Mammary epithelial cell (primary cell): ENCODE measurements at regions of chr1 and their contacts with region 1.

Region 1: DNA sequence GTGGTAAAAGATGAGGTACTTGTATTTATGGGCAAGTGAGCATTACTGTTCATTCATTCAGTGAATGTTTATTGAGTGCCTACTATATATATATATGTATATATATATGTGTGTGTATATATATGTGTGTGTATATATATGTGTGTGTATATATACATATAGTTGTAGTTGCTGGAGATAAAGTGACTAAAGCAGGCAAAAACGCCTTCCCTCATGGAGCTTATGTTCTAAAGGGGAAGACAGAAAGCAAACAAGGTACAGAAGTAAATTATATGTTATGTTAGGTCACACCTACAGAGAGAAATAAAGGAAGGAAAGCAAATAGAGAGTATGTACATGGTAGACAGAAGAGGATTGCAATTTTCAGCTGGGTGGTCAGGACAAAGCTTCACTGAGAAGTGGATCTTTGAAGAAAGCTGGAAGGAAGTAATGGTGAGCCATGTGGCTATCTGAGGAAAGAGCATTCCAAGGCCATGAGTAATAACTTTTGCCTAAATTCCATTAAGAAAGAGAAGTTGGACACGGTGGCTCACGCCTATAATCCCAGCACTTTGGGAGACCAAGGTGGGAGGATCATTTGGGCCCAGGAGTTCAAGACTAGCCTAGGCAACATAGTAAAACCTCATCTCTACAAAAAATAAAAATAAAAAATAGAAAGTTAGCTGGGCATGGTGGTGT is 33.5 kb upstream of the KLF17 start:
- DNase-seq: peak; percentile 44
- H3K4me3 ChIP-seq: no peak overlapping the region
- H3K27ac ChIP-seq: no peak overlapping the region
- H3K4me1 ChIP-seq: peaks cover 9% of the 10 kb centered on the region
- H3K27me3 ChIP-seq: no peaks in the 10 kb centered on the region
- CTCF ChIP-seq: no peak

Region 2: DNA sequence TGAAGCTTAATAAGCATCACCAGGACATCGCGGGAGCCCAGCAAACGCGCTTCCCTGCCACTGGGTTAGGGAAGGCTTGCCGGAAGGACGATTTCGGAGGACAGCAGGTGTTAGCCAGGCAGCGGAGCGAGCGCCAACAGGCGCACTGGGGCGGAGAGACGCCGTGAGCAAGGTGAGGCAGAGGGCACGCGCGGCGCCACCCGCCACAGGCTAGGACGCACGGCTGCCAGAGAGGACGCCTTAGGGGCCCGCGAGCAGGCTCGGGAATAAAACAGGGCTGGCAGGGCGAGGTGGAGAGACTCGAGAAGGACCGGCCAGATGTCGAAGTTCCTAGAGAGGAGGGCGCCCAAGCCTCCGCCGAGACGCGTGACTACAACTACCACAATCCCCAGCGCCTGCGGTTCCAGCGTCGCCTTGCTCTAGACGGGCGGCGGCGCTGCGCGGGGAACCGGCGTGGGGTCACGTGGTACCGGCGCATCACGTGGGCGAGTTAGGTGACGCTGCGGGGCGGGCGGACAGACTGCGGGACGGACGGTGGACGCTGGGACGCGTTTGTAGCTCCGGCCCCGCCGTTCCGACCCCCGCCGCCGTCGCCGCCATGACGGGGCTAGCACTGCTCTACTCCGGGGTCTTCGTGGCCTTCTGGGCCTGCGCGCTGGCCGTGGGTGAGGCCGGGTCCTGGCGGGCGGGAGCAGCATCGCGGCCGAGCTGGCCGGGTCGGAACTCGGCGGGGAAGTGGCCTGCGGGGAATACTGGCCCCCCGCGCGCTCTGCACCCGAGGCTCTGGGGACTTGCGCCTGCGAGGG is 110.5 kb before region 1 on chr1 and contains the start of gene ATP6V0B:
- CTCF ChIA-PET with region 1: no interaction called
- dilution Hi-C with region 1: no loop called
- in situ Hi-C with region 1: no loop called
- intact Hi-C with region 1: no loop called
- DNase-seq: peak; percentile 93
- H3K4me3 ChIP-seq: peak within 1 kb of the TSS; percentile 86 to 94 (median 89)
- H3K27ac ChIP-seq: peak within 1 kb of the TSS; percentile 64
- H3K4me1 ChIP-seq: peaks cover 39% of the 10 kb centered on the region
- H3K27me3 ChIP-seq: no peaks in the 10 kb centered on the region
- CTCF ChIP-seq: no peak
- total RNA-seq, gene ATP6V0B: 84.4 to 127 TPM

Region 3: DNA sequence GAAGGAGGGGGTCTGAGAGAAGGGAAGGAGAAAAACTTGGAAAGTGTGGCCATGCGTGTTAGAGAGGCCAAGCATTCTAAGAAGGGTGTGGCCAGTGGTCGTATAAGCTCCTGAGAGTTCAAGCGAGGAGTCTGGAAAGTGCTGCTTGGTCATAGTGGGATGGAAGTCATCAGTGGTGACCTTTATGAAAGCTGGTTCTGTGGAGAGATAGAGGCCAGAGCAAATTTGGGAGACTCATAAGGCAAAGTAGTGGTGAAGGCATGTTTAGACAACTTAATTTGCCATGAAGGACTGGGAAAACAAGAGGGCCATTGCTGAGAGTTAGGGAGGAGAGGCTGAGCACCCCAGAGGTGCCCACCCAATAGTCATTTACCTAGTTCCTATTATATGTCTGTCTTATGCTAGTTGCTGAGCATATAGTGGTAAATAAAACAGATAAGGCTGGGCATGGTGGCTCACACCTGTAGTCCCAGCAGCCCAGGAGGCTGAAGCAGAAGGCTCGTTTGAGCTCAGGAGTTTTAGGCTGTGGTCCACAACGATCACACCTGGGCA is 35.3 kb after region 1 on chr1:
- CTCF ChIA-PET with region 1: no interaction called
- dilution Hi-C with region 1: loop called (anchors 5 kb)
- in situ Hi-C with region 1: no loop called
- intact Hi-C with region 1: no loop called
- DNase-seq: no peak
- H3K4me3 ChIP-seq: no peak overlapping the region
- H3K27ac ChIP-seq: no peak overlapping the region
- H3K4me1 ChIP-seq: no peaks in the 10 kb centered on the region
- H3K27me3 ChIP-seq: no peaks in the 10 kb centered on the region
- CTCF ChIP-seq: no peak